Activated naive CD4-positive, alpha-beta T cell treated with anti-CD3 and anti-CD28 coated beads for 36 hours (primary cell): ENCODE measurements at regions of chr14 and their contacts with region 1.

Region 1: GRCh38 chr14:71380271-71380670 is 473.0 kb downstream of the PCNX1 start:
- DNase-seq: no peak
- H3K4me3 Mint-ChIP-seq: no peak overlapping the region
- H3K27ac Mint-ChIP-seq: no peak overlapping the region
- H3K4me1 Mint-ChIP-seq: peaks cover 27% of the 10 kb centered on the region
- H3K27me3 Mint-ChIP-seq: no peaks in the 10 kb centered on the region

Region 2: DNA sequence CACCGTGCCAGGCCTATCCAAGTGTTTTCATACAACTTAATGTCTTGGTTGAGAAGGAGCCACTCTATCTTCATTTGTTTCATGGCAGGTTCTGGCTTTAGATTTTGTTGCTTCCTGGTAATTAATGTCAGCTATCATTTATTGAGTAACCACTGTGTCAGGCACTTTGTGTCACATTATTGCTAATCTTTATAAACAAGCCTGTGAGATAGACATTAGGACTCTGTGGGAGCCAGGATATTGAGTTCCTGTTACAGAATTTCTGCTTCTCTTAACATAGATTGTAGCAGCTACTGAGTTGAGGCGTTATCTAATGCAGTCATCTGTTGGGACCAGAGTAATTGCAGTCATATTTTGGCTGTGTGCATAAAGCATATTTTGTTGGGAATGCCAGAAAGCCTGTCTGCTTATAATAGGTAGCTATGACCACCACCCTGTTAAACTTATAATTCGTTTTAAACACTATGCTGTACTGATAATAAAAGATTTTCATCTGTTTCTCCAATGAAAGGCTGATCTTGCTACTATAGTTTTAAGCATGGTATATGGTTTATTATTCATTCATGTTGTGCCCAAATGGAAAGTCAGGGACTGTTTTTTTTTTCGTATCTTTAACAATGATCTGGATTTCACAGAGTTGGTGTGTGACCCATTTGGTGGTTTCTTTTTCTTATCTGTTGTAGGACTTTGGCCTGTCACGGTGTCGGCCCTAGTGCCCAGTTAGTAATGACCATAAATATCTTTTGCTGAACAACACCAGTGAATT is 40.4 kb before region 1 on chr14:
- CTCF ChIA-PET with region 1: no interaction called
- intact Hi-C with region 1: loop called (anchors 1 kb)
- DNase-seq: no peak
- H3K4me3 Mint-ChIP-seq: no peak overlapping the region
- H3K27ac Mint-ChIP-seq: no peak overlapping the region
- H3K4me1 Mint-ChIP-seq: peaks cover 3% of the 10 kb centered on the region
- H3K27me3 Mint-ChIP-seq: no peaks in the 10 kb centered on the region